ENCODE measurements at regions of chr12 and their contacts with region 1.

Region 1: GRCh38 chr12:21697904-21698630 is 40.4 kb upstream of the LDHB start:
- DNase-seq: peak; percentile 49
- H3K4me3 ChIP-seq: no peak overlapping the region
- H3K27ac ChIP-seq: no peak overlapping the region
- H3K4me1 ChIP-seq: no peaks in the 10 kb centered on the region
- H3K27me3 ChIP-seq: peaks cover 3 to 5% of the 10 kb centered on the region in 2 experiments
- CTCF ChIP-seq: peak; percentile 17 to 21
- POLR2A ChIP-seq: no peak

Region 2: DNA sequence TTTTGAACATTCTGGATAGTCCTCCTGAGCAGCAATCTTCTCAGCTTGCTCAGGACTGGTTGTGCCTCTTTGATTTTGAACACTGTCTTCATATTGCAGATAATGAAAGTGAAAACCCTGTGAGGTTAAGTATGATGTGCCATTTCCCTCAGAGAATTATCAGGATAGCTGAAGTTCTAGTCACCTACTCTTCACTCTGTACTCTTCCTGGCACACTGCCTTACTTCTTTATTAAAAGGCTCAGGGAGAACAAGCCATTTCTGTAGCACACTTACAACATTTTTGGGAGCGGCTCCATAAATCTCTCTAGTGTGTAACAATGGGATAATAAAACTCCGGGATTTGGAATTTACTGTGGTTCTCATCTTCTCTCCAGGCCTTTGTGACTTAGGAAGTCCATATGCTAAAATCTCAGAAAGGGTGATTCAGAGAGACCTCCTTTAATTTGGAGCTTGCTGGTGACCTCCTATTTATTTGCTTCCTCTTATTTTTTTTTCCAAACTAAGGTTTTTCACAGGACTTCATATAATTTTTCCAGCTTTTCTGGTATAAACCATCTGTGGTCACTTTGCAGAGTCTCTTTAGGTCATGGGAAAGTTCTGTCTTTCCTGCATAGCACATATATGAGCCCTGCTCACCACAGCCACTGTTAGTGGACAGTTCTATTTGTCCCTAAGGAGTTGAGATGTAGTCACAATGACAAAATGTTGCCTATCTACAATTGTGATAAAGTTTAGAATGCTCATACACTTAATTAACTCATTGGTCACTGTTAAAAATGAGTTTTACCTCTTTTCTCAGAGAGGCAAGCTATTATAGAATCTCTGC is 13.1 kb after region 1 on chr12:
- CTCF ChIA-PET with region 1: interaction called, 31 read pairs
- POLR2A ChIA-PET with region 1: no interaction called
- dilution Hi-C with region 1: no loop called
- intact Hi-C with region 1: no loop called
- DNase-seq: no peak
- H3K4me3 ChIP-seq: no peak overlapping the region
- H3K27ac ChIP-seq: no peak overlapping the region
- H3K4me1 ChIP-seq: no peaks in the 10 kb centered on the region
- H3K27me3 ChIP-seq: no peaks in the 10 kb centered on the region
- CTCF ChIP-seq: no peak
- POLR2A ChIP-seq: no peak

Region 3: GRCh38 chr12:21818627-21819026 is 120.6 kb after region 1 on chr12:
- CTCF ChIA-PET with region 1: no interaction called
- POLR2A ChIA-PET with region 1: no interaction called
- dilution Hi-C with region 1: no loop called
- intact Hi-C with region 1: no loop called
- DNase-seq: no peak
- H3K4me3 ChIP-seq: no peak overlapping the region
- H3K27ac ChIP-seq: no peak overlapping the region
- H3K4me1 ChIP-seq: no peaks in the 10 kb centered on the region
- H3K27me3 ChIP-seq: no peaks in the 10 kb centered on the region
- CTCF ChIP-seq: no peak
- POLR2A ChIP-seq: no peak

Region 4: GRCh38 chr12:21984375-21984774 is 286.3 kb after region 1 on chr12:
- CTCF ChIA-PET with region 1: interaction called, 517 read pairs
- POLR2A ChIA-PET with region 1: no interaction called
- dilution Hi-C with region 1: no loop called
- intact Hi-C with region 1: loop called (anchors 1 kb)
- DNase-seq: no peak
- H3K4me3 ChIP-seq: no peak overlapping the region
- H3K27ac ChIP-seq: no peak overlapping the region
- H3K4me1 ChIP-seq: no peaks in the 10 kb centered on the region
- H3K27me3 ChIP-seq: peaks cover 0 to 3% of the 10 kb centered on the region in 2 experiments
- CTCF ChIP-seq: no peak
- POLR2A ChIP-seq: no peak

Region 5: GRCh38 chr12:22018860-22019259 is 320.8 kb after region 1 on chr12:
- CTCF ChIA-PET with region 1: interaction called, 218 read pairs
- POLR2A ChIA-PET with region 1: interaction called, 5 read pairs
- dilution Hi-C with region 1: no loop called
- intact Hi-C with region 1: loop called (anchors 1 kb)
- DNase-seq: peak; percentile 28
- H3K4me3 ChIP-seq: no peak overlapping the region
- H3K27ac ChIP-seq: no peak overlapping the region
- H3K4me1 ChIP-seq: no peaks in the 10 kb centered on the region
- H3K27me3 ChIP-seq: no peaks in the 10 kb centered on the region
- CTCF ChIP-seq: peak in 1 of 2 donors; percentile 13
- POLR2A ChIP-seq: no peak

Region 6: GRCh38 chr12:22083167-22083566 is 385.1 kb after region 1 on chr12:
- CTCF ChIA-PET with region 1: interaction called, 12 read pairs
- POLR2A ChIA-PET with region 1: no interaction called
- dilution Hi-C with region 1: no loop called
- intact Hi-C with region 1: no loop called
- DNase-seq: peak; percentile 56
- H3K4me3 ChIP-seq: no peak overlapping the region
- H3K27ac ChIP-seq: no peak overlapping the region
- H3K4me1 ChIP-seq: no peaks in the 10 kb centered on the region
- H3K27me3 ChIP-seq: peaks cover 0 to 2% of the 10 kb centered on the region in 2 experiments
- CTCF ChIP-seq: peak in 1 of 2 donors; percentile 12
- POLR2A ChIP-seq: no peak

Region 7: DNA sequence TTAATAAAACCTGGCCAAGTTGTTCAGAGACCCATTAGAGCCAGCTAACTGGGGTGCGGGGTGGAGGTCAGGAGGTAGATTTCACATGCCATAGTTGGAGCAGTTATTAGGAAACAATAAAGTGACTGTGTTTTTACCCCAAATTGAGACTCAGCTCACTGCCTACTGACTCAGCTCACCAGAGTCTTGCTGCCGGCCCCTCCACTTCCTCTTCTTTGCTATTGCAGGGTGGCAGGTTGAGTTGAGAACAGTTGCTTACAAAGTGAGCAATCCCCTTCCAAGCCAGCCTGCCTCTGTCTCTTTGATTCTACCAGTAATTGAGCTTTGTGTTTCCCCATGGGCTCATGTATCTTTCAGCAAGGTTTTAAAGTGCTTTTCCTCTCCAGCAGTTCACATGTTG is 623.6 kb after region 1 on chr12:
- CTCF ChIA-PET with region 1: no interaction called
- POLR2A ChIA-PET with region 1: no interaction called
- dilution Hi-C with region 1: no loop called
- intact Hi-C with region 1: no loop called
- DNase-seq: no peak
- H3K4me3 ChIP-seq: no peak overlapping the region
- H3K27ac ChIP-seq: no peak overlapping the region
- H3K4me1 ChIP-seq: no peaks in the 10 kb centered on the region
- H3K27me3 ChIP-seq: peaks cover 8 to 9% of the 10 kb centered on the region in 2 experiments
- CTCF ChIP-seq: no peak
- POLR2A ChIP-seq: no peak

Region 8: GRCh38 chr12:22443379-22444316 is 745.6 kb after region 1 on chr12:
- CTCF ChIA-PET with region 1: interaction called, 62 read pairs
- POLR2A ChIA-PET with region 1: no interaction called
- dilution Hi-C with region 1: no loop called
- intact Hi-C with region 1: loop called (anchors 1 kb)
- DNase-seq: peak; percentile 67
- H3K4me3 ChIP-seq: no peak overlapping the region
- H3K27ac ChIP-seq: no peak overlapping the region
- H3K4me1 ChIP-seq: no peaks in the 10 kb centered on the region
- H3K27me3 ChIP-seq: peaks cover 0 to 4% of the 10 kb centered on the region in 2 experiments
- CTCF ChIP-seq: peak; percentile 58 to 67
- POLR2A ChIP-seq: no peak